Activated CD8-positive, alpha-beta T cell treated with anti-CD3 and anti-CD28 coated beads, Interleukin-2, amount 10 ng/mL, durations not matched to agents 7 days and 5 days (primary cell): ENCODE measurements at regions of chr15 and their contacts with region 1.

Region 1: DNA sequence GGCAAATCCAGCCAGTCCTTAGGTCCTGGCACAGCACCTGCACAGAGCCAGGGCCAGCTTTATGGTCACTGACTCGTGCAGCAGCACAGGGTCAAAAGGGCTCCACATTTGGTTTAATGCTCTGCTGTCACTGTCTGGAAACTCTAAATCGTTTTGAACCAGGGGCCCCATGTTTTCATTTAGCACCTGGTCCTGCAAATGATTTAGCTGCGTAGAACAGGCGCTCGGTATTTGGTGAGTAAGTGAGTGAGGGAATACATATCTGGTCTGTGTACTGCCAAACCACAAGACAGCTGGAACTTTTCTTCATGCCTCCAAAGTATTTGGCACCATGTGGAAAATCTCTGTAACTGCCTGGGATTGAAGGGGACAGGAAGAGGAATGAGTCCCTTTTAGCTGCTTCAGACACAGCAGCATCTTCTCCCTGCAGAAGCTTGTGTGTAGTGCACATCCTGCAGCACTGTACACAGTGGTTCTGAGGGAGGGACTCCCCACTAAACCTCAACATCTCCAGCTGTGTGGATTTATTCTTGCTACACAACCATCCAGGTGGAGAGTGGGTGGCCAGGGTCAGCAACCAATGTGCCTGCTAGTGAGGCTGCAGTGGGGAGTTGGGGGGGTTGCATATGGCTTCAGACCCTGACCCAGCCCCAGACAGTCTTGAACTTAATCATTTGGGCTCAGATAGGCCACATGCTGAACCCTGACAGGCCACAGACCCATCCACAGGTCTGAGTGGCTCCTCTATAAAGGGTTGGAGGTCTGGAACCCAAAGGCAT is 1.1 kb downstream of the SH2D7 start:
- DNase-seq: peak; percentile 40
- ATAC-seq: peak; percentile 72
- H3K4me3 Mint-ChIP-seq: peak overlapping the region; percentile 45
- H3K27ac Mint-ChIP-seq: peak overlapping the region; percentile 73
- H3K4me1 Mint-ChIP-seq: peaks cover 44% of the 10 kb centered on the region
- H3K27me3 Mint-ChIP-seq: no peaks in the 10 kb centered on the region

Region 2: GRCh38 chr15:77889009-77889806 is 204.2 kb before region 1 on chr15:
- CTCF ChIA-PET with region 1: no interaction called
- POLR2A ChIA-PET with region 1: no interaction called
- DNase-seq: no peak
- ATAC-seq: no peak
- H3K4me3 Mint-ChIP-seq: no peak overlapping the region
- H3K27ac Mint-ChIP-seq: no peak overlapping the region
- H3K4me1 Mint-ChIP-seq: no peaks in the 10 kb centered on the region
- H3K27me3 Mint-ChIP-seq: no peaks in the 10 kb centered on the region

Region 3: GRCh38 chr15:78082106-78083078 is 11.0 kb before region 1 on chr15:
- CTCF ChIA-PET with region 1: interaction called, 14 read pairs
- POLR2A ChIA-PET with region 1: interaction called, 4 read pairs
- DNase-seq: no peak
- ATAC-seq: no peak
- H3K4me3 Mint-ChIP-seq: no peak overlapping the region
- H3K27ac Mint-ChIP-seq: peak overlapping the region; percentile 80
- H3K4me1 Mint-ChIP-seq: peaks cover 53% of the 10 kb centered on the region
- H3K27me3 Mint-ChIP-seq: no peaks in the 10 kb centered on the region

Region 4: GRCh38 chr15:78131295-78132061 is 38.0 kb after region 1 on chr15 and contains the start of gene CIB2:
- CTCF ChIA-PET with region 1: no interaction called
- POLR2A ChIA-PET with region 1: no interaction called
- DNase-seq: peak; percentile 79
- ATAC-seq: peak; percentile 90
- H3K4me3 Mint-ChIP-seq: peak within 1 kb of the TSS; percentile 78
- H3K27ac Mint-ChIP-seq: peak within 1 kb of the TSS; percentile 73
- H3K4me1 Mint-ChIP-seq: peaks cover 24% of the 10 kb centered on the region
- H3K27me3 Mint-ChIP-seq: no peaks in the 10 kb centered on the region
- total RNA-seq, gene CIB2: 1.4 to 2.2 TPM